CD14-positive monocyte (primary cell): ENCODE measurements at regions of chr2 and their contacts with region 1.

Region 1: DNA sequence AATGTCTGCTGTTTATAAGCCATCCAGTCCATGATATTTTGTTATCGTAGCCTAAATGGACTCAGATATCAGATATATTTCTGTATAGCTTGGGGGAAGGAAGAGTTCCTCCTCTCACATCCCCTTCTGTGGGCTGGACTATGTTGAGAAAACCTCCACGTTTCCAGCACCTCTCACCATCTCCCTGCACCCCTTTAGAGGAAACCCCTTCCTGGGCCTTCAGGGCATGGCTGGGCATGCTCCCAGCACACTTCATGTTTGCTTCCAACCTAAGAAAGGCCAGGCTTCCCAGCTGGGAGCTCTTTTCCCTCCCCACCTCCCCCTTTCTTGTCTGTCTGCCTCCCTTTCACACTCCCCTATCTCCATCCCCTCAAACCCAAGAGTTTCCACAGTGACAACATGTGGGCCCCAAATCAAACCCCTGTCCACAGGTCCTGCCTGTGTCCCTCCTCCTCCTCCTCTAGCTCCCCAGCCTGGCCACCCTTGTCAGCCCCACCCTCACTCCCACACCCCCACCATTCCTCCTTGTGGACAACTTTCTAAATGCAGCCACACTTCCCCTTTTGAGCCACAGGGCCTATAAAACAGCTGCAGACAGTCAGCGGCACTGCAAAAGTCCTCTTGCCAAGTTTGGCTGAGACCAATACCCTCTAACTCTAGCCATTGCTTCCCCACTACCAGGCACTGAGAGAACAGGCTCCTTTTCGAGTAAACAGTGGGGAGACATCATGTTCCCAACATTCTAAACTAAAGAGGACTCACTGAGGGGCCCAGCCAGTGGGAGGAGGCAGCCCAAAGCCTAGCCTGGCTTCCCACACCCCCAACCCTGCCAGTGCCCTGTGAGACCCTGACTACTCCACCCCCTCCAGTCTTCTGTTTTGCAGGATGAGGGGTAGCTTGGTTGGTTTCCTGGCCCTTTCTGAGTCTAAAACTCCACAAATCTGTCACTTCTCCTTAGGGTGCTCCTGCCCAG is 120.5 kb downstream of the ZFP36L2 start:
- DNase-seq: peak; percentile 72 to 84 (median 84)
- H3K4me3 ChIP-seq: peak overlapping the region in 1 of 3 experiments; percentile 58
- H3K4me3 Mint-ChIP-seq: peak overlapping the region; percentile 50 to 67
- H3K27ac ChIP-seq: peak overlapping the region; percentile 84 to 89
- H3K27ac Mint-ChIP-seq: peak overlapping the region; percentile 93 to 99 (median 98)
- H3K4me1 ChIP-seq: peaks cover 89 to 95% of the 10 kb centered on the region in 2 donors
- H3K4me1 Mint-ChIP-seq: peaks cover 88% of the 10 kb centered on the region
- H3K27me3 ChIP-seq: no peaks in the 10 kb centered on the region
- H3K27me3 Mint-ChIP-seq: peaks cover 0 to 5% (median 0%) of the 10 kb centered on the region in 3 donors
- CTCF ChIP-seq: peak; percentile 67

Region 2: GRCh38 chr2:42810121-42810970 is 295.5 kb before region 1 on chr2:
- intact Hi-C with region 1: loop called in 1 of 2 experiments (anchors 10 kb)
- DNase-seq: peak; percentile 95 to 96 (median 95)
- H3K4me3 ChIP-seq: peak overlapping the region; percentile 42 to 79 (median 57)
- H3K4me3 Mint-ChIP-seq: peak overlapping the region; percentile 90 to 94
- H3K27ac ChIP-seq: peak overlapping the region; percentile 92 to 93
- H3K27ac Mint-ChIP-seq: peak overlapping the region; percentile 93 to 99 (median 97)
- H3K4me1 ChIP-seq: peaks cover 21 to 26% of the 10 kb centered on the region in 2 donors
- H3K4me1 Mint-ChIP-seq: peaks cover 39% of the 10 kb centered on the region
- H3K27me3 ChIP-seq: no peaks in the 10 kb centered on the region
- H3K27me3 Mint-ChIP-seq: peaks cover 1 to 7% (median 6%) of the 10 kb centered on the region in 3 donors
- CTCF ChIP-seq: no peak

Region 3: DNA sequence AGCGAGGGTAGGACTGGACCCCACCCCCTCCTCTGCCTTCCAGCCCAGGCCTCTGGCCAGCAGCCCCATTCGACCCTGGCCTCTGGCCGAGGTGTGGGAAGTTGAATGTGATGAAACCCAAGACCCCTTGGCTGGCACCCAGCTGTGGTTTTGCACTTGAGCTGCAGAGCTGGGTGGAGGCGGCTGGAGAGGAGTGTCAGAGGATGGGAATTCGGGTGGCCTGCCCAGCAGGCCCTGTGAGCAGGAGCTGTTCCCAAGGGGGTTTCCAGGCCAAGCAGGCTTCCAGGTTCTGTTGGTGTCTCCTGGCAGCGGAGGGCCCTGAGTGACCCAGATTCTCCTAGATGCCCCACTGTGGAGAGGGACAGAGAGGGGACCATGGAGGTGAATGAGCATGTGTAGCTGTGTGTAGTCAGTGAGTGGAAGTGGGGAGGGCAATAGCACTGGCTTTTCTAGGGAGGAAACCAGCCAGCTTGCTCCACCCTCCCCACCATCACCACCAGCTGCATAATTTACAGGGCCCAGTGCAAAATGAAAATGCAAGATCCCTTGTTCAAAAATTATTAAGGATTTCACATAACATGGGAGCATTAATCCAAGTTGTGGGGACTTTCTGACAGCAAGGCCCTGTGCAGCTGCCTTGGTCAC is 141.3 kb before region 1 on chr2:
- intact Hi-C with region 1: loop called in 1 of 2 experiments (anchors 10 kb)
- DNase-seq: peak in 1 of 3 donors; percentile 16
- H3K4me3 ChIP-seq: no peak overlapping the region
- H3K4me3 Mint-ChIP-seq: no peak overlapping the region
- H3K27ac ChIP-seq: no peak overlapping the region
- H3K27ac Mint-ChIP-seq: peak overlapping the region in 2 of 7 donors; percentile 22 to 66
- H3K4me1 ChIP-seq: peaks cover 63 to 66% of the 10 kb centered on the region in 2 donors
- H3K4me1 Mint-ChIP-seq: peaks cover 79% of the 10 kb centered on the region
- H3K27me3 ChIP-seq: no peaks in the 10 kb centered on the region
- H3K27me3 Mint-ChIP-seq: peaks cover 5 to 16% (median 7%) of the 10 kb centered on the region in 3 donors
- CTCF ChIP-seq: no peak

Region 4: DNA sequence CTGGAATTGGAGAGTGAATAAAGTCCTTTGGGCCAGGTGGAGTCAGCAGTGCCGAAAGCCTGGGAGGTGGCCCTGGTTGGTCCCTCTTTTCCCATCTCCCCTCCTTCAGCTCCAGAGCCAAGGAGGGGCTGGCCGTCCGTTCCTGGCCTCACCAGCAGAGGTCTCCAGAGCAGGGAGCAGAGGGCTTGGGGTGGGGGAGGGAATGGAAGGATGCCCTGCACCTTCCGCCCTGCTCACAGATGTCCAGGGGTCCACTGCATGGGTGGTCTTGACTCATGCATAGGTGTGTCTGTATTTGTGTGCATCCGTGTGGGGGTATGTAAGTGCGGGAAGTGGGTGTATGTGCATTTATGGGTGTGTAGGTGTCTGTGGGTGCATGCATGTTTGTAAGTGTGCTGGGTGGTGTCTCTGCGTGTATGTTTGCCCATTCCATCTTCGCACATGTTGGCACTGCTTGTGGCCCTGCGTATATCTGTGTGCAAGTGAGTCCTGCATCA is 81.3 kb before region 1 on chr2:
- intact Hi-C with region 1: loop called in 1 of 2 experiments (anchors 5 kb)
- DNase-seq: peak; percentile 30 to 46 (median 43)
- H3K4me3 ChIP-seq: no peak overlapping the region
- H3K4me3 Mint-ChIP-seq: no peak overlapping the region
- H3K27ac ChIP-seq: peak overlapping the region in 1 of 2 donors; percentile 65
- H3K27ac Mint-ChIP-seq: peak overlapping the region in 5 of 7 donors; percentile 17 to 77 (median 51)
- H3K4me1 ChIP-seq: peaks cover 73 to 76% of the 10 kb centered on the region in 2 donors
- H3K4me1 Mint-ChIP-seq: peaks cover 81% of the 10 kb centered on the region
- H3K27me3 ChIP-seq: no peaks in the 10 kb centered on the region
- H3K27me3 Mint-ChIP-seq: peaks cover 0 to 3% (median 1%) of the 10 kb centered on the region in 3 donors
- CTCF ChIP-seq: peak; percentile 72

Region 5: GRCh38 chr2:43158259-43158880 is 52.5 kb after region 1 on chr2:
- intact Hi-C with region 1: loop called in 1 of 2 experiments (anchors 2 kb)
- DNase-seq: peak; percentile 73 to 85 (median 77)
- H3K4me3 ChIP-seq: peak overlapping the region in 1 of 3 experiments; percentile 57
- H3K4me3 Mint-ChIP-seq: peak overlapping the region; percentile 65 to 83
- H3K27ac ChIP-seq: peak overlapping the region; percentile 90 to 93
- H3K27ac Mint-ChIP-seq: peak overlapping the region; percentile 97 to 100 (median 99)
- H3K4me1 ChIP-seq: peaks cover 61 to 65% of the 10 kb centered on the region in 2 donors
- H3K4me1 Mint-ChIP-seq: peaks cover 62% of the 10 kb centered on the region
- H3K27me3 ChIP-seq: no peaks in the 10 kb centered on the region
- H3K27me3 Mint-ChIP-seq: peaks cover 0 to 8% (median 3%) of the 10 kb centered on the region in 3 donors
- CTCF ChIP-seq: no peak

Region 6: DNA sequence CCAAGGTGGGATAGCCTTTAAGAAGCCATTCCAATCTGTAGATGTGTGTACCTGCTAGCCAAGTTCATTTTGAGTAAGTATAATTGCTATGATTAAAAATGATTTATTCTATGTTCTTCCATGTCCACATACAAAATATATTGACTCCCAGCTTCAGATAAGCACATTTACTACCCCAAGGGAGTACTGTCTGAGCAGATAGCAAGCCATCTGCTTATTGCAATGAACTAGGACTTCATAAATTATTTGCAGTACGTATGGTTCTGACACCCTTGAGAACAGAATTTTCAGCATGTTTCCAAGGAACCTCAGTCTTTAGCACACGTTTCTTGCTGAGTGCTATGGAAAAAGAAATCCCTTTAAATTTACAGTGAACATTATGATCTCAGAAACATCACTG is 704.6 kb after region 1 on chr2:
- intact Hi-C with region 1: no loop called
- DNase-seq: no peak
- H3K4me3 ChIP-seq: no peak overlapping the region
- H3K4me3 Mint-ChIP-seq: no peak overlapping the region
- H3K27ac ChIP-seq: no peak overlapping the region
- H3K27ac Mint-ChIP-seq: no peak overlapping the region
- H3K4me1 ChIP-seq: no peaks in the 10 kb centered on the region
- H3K4me1 Mint-ChIP-seq: no peaks in the 10 kb centered on the region
- H3K27me3 ChIP-seq: no peaks in the 10 kb centered on the region
- H3K27me3 Mint-ChIP-seq: no peaks in the 10 kb centered on the region
- CTCF ChIP-seq: no peak